Heart right ventricle (tissue), 16 donors: ENCODE measurements at regions of chr10 and their contacts with region 1.

Region 1: GRCh38 chr10:50325449-50326171 is 74.3 kb upstream of the ASAH2 start:
- DNase-seq: peak; percentile 15 to 34
- ATAC-seq: peak; percentile 36 to 91 (median 84)
- H3K4me3 ChIP-seq: peak overlapping the region in 6 of 10 donors; percentile 10 to 44 (median 36)
- H3K27ac ChIP-seq: peak overlapping the region; percentile 2 to 85 (median 71)
- H3K4me1 ChIP-seq: peaks cover 5 to 80% (median 51%) of the 10 kb centered on the region in 9 donors
- H3K27me3 ChIP-seq: no peaks in the 10 kb centered on the region
- CTCF ChIP-seq: no peak

Region 2: DNA sequence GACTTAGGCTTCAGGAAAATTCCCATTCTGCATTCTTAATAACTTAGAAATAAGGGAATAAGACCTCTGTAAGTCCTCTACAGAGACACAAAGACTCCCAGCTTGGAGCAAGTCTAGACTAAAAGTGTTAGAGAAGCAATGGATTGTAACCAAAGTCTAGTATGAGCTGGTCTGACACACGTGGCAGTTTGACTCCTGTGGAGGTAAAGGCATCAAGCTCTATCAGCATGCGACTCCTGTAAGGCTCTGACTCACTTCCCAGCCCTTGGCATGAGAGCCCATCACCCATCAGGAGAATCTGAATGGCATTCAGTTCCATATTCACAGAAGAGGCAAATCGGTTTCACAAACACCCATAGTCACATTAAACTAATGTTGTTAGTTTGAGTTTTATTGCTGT is 1205.9 kb before region 1 on chr10:
- intact Hi-C with region 1: no loop called
- DNase-seq: no peak
- ATAC-seq: no peak
- H3K4me3 ChIP-seq: no peak overlapping the region
- H3K27ac ChIP-seq: no peak overlapping the region
- H3K4me1 ChIP-seq: peaks cover 0 to 14% (median 3%) of the 10 kb centered on the region in 9 donors
- H3K27me3 ChIP-seq: peaks cover 0 to 9% (median 0%) of the 10 kb centered on the region in 7 donors
- CTCF ChIP-seq: no peak

Region 3: DNA sequence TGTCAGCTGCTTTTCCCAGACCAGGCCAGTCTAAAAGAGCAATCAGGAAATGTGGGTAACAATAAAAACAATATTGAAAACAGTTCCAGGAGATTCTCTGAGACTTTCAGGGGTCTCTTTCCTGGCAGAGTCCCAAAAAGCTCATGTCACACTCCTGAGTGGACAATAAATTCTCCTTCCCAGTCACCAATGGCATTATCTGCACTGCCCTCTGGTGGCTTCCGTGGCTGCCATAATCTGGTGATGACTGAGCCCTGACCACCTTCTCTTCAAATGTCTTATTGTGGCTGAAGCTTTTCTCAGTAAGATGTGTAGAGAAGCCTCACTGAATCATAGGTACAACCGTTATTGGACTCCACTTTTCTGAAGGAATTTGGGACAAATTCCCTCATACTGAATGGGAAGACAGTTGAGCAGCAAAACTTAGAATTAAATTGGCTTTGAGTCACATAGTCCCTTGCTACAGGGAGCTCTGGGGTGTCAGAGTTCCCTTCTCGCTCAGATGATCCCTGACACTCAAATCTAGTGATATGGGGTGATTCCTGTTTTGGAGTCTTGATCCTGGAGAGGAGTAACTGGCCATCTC is 49.9 kb before region 1 on chr10:
- intact Hi-C with region 1: no loop called
- DNase-seq: peak; percentile 18 to 29
- ATAC-seq: peak in 2 of 8 donors; percentile 45 to 61
- H3K4me3 ChIP-seq: no peak overlapping the region
- H3K27ac ChIP-seq: no peak overlapping the region
- H3K4me1 ChIP-seq: no peaks in the 10 kb centered on the region
- H3K27me3 ChIP-seq: peaks cover 0 to 23% (median 3%) of the 10 kb centered on the region in 7 donors
- CTCF ChIP-seq: peak in 8 of 9 donors; percentile 12 to 70 (median 58)

Region 4: GRCh38 chr10:50304660-50305059 is 20.9 kb before region 1 on chr10:
- intact Hi-C with region 1: no loop called
- DNase-seq: no peak
- ATAC-seq: no peak
- H3K4me3 ChIP-seq: no peak overlapping the region
- H3K27ac ChIP-seq: no peak overlapping the region
- H3K4me1 ChIP-seq: no peaks in the 10 kb centered on the region
- H3K27me3 ChIP-seq: no peaks in the 10 kb centered on the region
- CTCF ChIP-seq: no peak

Region 5: GRCh38 chr10:50375051-50375452 is 49.4 kb after region 1 on chr10:
- intact Hi-C with region 1: loop called in 2 of 10 experiments (anchors 5 kb)
- DNase-seq: no peak
- ATAC-seq: no peak
- H3K4me3 ChIP-seq: no peak overlapping the region
- H3K27ac ChIP-seq: peak overlapping the region in 4 of 10 donors; percentile 62 to 77 (median 72)
- H3K4me1 ChIP-seq: peaks cover 0 to 45% (median 32%) of the 10 kb centered on the region in 9 donors
- H3K27me3 ChIP-seq: no peaks in the 10 kb centered on the region
- CTCF ChIP-seq: no peak

Region 6: GRCh38 chr10:50381642-50382041 is 56.0 kb after region 1 on chr10:
- intact Hi-C with region 1: loop called in 1 of 10 experiments (anchors 5 kb)
- DNase-seq: no peak
- ATAC-seq: peak in 6 of 8 donors; percentile 11 to 64 (median 48)
- H3K4me3 ChIP-seq: no peak overlapping the region
- H3K27ac ChIP-seq: peak overlapping the region in 6 of 10 donors; percentile 13 to 68 (median 52)
- H3K4me1 ChIP-seq: peaks cover 0 to 70% (median 59%) of the 10 kb centered on the region in 9 donors
- H3K27me3 ChIP-seq: no peaks in the 10 kb centered on the region
- CTCF ChIP-seq: no peak

Region 7: GRCh38 chr10:50417886-50418830 is 92.5 kb after region 1 on chr10:
- intact Hi-C with region 1: loop called in 5 of 10 experiments (anchors 10 kb)
- DNase-seq: peak; percentile 70 to 79
- ATAC-seq: peak; percentile 86 to 97 (median 92)
- H3K4me3 ChIP-seq: peak overlapping the region; percentile 44 to 80 (median 68)
- H3K27ac ChIP-seq: peak overlapping the region; percentile 34 to 91 (median 82)
- H3K4me1 ChIP-seq: peaks cover 0 to 82% (median 35%) of the 10 kb centered on the region in 9 donors
- H3K27me3 ChIP-seq: no peaks in the 10 kb centered on the region
- CTCF ChIP-seq: peak in 2 of 9 donors; percentile 21 to 29

Region 8: DNA sequence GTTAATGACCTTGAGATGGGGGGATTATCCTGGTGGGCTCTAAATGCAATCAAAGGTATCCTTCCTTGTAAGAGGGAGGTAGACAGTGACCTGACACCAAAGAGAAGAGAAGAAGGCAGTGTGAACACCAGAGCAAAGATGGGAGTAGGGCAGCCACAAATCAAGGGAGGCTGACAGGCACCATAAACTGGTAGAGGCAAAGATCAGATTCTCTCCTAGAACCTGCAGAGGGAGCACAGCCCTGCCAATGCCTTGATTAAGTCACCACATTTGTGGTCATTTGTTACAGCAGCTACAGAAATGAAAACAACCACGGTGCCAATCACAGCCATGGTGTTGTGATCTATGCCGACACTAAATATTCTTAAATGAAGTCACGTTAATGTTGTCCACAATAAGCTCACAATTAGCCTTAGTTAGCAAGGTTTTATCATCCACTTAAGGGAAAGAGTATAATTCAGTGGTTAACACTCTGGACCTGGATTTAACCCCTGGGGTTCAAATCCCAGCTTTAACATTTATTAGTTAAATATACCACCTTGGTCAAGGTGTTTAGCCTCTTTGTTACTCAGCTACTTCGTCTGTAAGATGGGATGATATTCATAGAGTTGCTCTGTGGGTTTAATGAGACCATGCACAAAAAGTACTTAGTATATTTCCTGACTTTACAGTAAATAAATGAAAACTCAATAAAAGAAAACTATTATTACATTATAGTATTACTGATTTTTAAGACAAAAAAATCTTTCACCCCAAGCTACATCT is 227.3 kb after region 1 on chr10:
- intact Hi-C with region 1: loop called in 1 of 10 experiments (anchors 10 kb)
- DNase-seq: no peak
- ATAC-seq: no peak
- H3K4me3 ChIP-seq: no peak overlapping the region
- H3K27ac ChIP-seq: peak overlapping the region in 6 of 10 donors; percentile 11 to 74 (median 44)
- H3K4me1 ChIP-seq: peaks cover 11 to 86% (median 71%) of the 10 kb centered on the region in 9 donors
- H3K27me3 ChIP-seq: no peaks in the 10 kb centered on the region
- CTCF ChIP-seq: peak in 5 of 9 donors; percentile 9 to 41 (median 30)

Region 9: DNA sequence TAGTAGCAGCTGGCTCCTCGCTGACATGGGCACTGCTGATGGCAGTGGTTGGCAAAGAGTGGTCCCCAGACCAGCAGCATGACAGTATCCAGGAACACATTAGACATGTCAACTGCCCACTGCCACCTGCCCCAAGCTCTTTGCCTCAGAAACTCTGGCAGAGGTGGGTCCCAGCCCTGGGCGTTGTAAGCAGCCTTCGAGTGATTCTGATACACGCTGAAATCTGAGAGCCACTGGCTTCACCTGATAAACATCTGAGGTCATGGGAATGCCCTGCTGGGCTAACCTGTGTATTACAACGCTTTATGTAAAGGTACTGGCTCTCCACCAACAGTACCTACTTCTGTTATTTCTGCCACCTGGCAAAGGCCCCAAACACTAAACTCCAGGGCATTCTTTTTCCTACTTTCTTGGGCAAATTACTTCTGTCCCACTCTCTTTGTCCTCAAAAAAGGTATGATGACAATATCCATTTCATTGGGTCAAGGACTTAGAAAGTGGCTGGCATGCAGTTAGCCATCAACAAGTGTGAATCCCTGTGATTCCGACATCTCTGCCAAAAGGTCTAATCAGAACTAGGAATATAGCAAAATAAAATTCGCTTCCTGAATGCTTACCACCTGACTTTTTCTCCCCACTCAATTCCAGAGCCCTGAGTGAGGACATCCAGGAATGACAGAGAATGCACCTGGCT is 289.0 kb after region 1 on chr10:
- intact Hi-C with region 1: no loop called
- DNase-seq: no peak
- ATAC-seq: peak in 6 of 8 donors; percentile 15 to 71 (median 54)
- H3K4me3 ChIP-seq: no peak overlapping the region
- H3K27ac ChIP-seq: peak overlapping the region in 2 of 10 donors; percentile 25 to 29
- H3K4me1 ChIP-seq: peaks cover 0 to 62% (median 38%) of the 10 kb centered on the region in 9 donors
- H3K27me3 ChIP-seq: no peaks in the 10 kb centered on the region
- CTCF ChIP-seq: peak in 4 of 9 donors; percentile 5 to 7 (median 6)